H1 (cell line): ENCODE measurements at regions of chr22 and their contacts with region 1.

Region 1: GRCh38 chr22:29306175-29306834 is at the start of gene GAS2L1:
- DNase-seq: peak; percentile 50 to 87
- H3K4me3 ChIP-seq: peak within 1 kb of the TSS; percentile 40 to 68 (median 52)
- H3K27ac ChIP-seq: no peak within 1 kb of the TSS
- H3K4me1 ChIP-seq: peaks cover 0 to 13% (median 7%) of the 10 kb centered on the region in 4 experiments; a peak in 5 of 7 replicates
- H3K27me3 ChIP-seq: peaks cover 0 to 7% (median 0%) of the 10 kb centered on the region in 4 experiments; a peak in 2 of 7 replicates
- CTCF ChIP-seq: peak in 1 of 3 experiments; percentile 3; a peak in 1 of 4 replicates
- EP300 ChIP-seq: no peak
- POLR2A ChIP-seq: no peak
- RAD21 ChIP-seq: no peak
- total RNA-seq, gene GAS2L1: 9.7 and 10.1 TPM in 2 replicates

Region 2: DNA sequence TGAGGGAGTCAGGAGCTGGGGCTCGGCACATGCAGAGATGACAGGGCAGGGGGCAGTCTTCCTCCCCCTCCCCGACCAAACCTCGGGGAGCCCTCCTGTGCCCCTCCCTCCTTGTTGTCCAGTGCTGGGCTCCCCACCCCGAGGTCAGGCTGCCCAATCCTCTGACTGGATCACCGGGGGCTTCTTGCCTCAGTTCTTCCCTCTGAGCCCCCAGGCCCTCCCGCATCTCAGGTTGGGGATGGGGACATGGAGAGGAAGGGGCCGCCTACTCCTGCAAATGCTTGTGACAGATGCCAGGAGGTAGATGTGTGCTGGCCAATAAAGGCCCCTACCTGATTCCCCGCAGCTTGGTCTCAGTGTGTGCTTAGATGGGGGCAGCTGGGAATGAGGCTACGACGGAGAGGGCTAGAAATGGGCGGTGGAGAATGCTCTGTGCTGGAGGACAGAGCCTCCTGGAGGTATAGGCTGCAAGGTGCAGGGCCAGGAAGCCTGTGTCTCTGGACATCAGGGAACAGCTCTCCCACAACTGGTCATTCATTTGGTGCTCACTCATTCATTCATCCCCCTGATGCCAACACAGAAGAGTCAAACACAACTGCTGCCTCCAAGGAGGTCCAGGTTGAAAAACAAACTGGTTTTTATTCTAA is 46.9 kb before region 1 on chr22:
- CTCF ChIA-PET with region 1: interaction called, 3 read pairs
- POLR2A ChIA-PET with region 1: interaction called, 31 read pairs
- DNase-seq: no peak
- H3K4me3 ChIP-seq: no peak overlapping the region
- H3K27ac ChIP-seq: no peak overlapping the region
- H3K4me1 ChIP-seq: no peaks in the 10 kb centered on the region; a peak in 1 of 7 replicates
- H3K27me3 ChIP-seq: no peaks in the 10 kb centered on the region
- CTCF ChIP-seq: peak; percentile 35 to 67 (median 61)
- EP300 ChIP-seq: no peak
- POLR2A ChIP-seq: peak in 1 of 2 experiments; percentile 30; a peak in 1 of 3 replicates
- RAD21 ChIP-seq: peak; percentile 39 to 52

Region 3: GRCh38 chr22:29267858-29268417 is 38.4 kb before region 1 on chr22 and contains the starts of genes EWSR1 and RHBDD3:
- CTCF ChIA-PET with region 1: no interaction called
- POLR2A ChIA-PET with region 1: interaction called, 147 read pairs
- DNase-seq: peak; percentile 69 to 100
- H3K4me3 ChIP-seq: peak within 1 kb of the TSS; percentile 80 to 96 (median 95)
- H3K27ac ChIP-seq: peak within 1 kb of the TSS; percentile 100
- H3K4me1 ChIP-seq: peaks cover 6 to 19% (median 11%) of the 10 kb centered on the region in 4 experiments; a peak in 6 of 7 replicates
- H3K27me3 ChIP-seq: no peaks in the 10 kb centered on the region
- CTCF ChIP-seq: no peak
- EP300 ChIP-seq: peak in 1 of 2 experiments; percentile 98; a peak in 2 of 3 replicates
- POLR2A ChIP-seq: peak; percentile 87 to 91; a peak in 2 of 3 replicates
- RAD21 ChIP-seq: no peak
- total RNA-seq, gene EWSR1: 385 and 387 TPM in 2 replicates
- total RNA-seq, gene RHBDD3: 72.1 and 75.7 TPM in 2 replicates

Region 4: GRCh38 chr22:29275819-29276565 is 30.3 kb before region 1 on chr22:
- CTCF ChIA-PET with region 1: interaction called, 3 read pairs
- POLR2A ChIA-PET with region 1: interaction called, 147 read pairs
- DNase-seq: no peak
- H3K4me3 ChIP-seq: no peak overlapping the region
- H3K27ac ChIP-seq: no peak overlapping the region
- H3K4me1 ChIP-seq: peaks cover 0 to 4% (median 0%) of the 10 kb centered on the region in 4 experiments; a peak in 2 of 7 replicates
- H3K27me3 ChIP-seq: no peaks in the 10 kb centered on the region
- CTCF ChIP-seq: no peak
- EP300 ChIP-seq: no peak
- POLR2A ChIP-seq: no peak
- RAD21 ChIP-seq: no peak

Region 5: GRCh38 chr22:29291215-29291614 is 15.1 kb before region 1 on chr22:
- CTCF ChIA-PET with region 1: interaction called, 10 read pairs
- POLR2A ChIA-PET with region 1: interaction called, 66 read pairs
- DNase-seq: no peak
- H3K4me3 ChIP-seq: no peak overlapping the region
- H3K27ac ChIP-seq: no peak overlapping the region
- H3K4me1 ChIP-seq: no peaks in the 10 kb centered on the region
- H3K27me3 ChIP-seq: no peaks in the 10 kb centered on the region
- CTCF ChIP-seq: no peak
- EP300 ChIP-seq: no peak
- POLR2A ChIP-seq: no peak
- RAD21 ChIP-seq: no peak

Region 6: GRCh38 chr22:29397791-29398190 is 91.5 kb after region 1 on chr22:
- CTCF ChIA-PET with region 1: no interaction called
- POLR2A ChIA-PET with region 1: no interaction called
- DNase-seq: no peak
- H3K4me3 ChIP-seq: no peak overlapping the region
- H3K27ac ChIP-seq: no peak overlapping the region
- H3K4me1 ChIP-seq: no peaks in the 10 kb centered on the region
- H3K27me3 ChIP-seq: no peaks in the 10 kb centered on the region
- CTCF ChIP-seq: no peak
- EP300 ChIP-seq: no peak
- POLR2A ChIP-seq: no peak
- RAD21 ChIP-seq: no peak